Heart left ventricle (tissue), 16 donors: ENCODE measurements at regions of chr12 and their contacts with region 1.

Region 1: GRCh38 chr12:53461059-53461458 is 9.2 kb downstream of the PCBP2 start:
- DNase-seq: peak in 4 of 5 donors; percentile 70 to 75 (median 73)
- ATAC-seq: peak; percentile 83 to 93 (median 90)
- H3K4me3 ChIP-seq: peak overlapping the region in 1 of 12 donors; percentile 1
- H3K27ac ChIP-seq: peak overlapping the region in 11 of 12 donors; percentile 23 to 75 (median 60)
- H3K4me1 ChIP-seq: peaks cover 2 to 81% (median 49%) of the 10 kb centered on the region in 12 donors
- H3K27me3 ChIP-seq: no peaks in the 10 kb centered on the region
- CTCF ChIP-seq: no peak
- POLR2A ChIP-seq: peak; percentile 22 to 63

Region 2: GRCh38 chr12:53474819-53475218 is 13.8 kb after region 1 on chr12:
- intact Hi-C with region 1: loop called in 1 of 10 experiments (anchors 2 kb)
- DNase-seq: no peak
- ATAC-seq: no peak
- H3K4me3 ChIP-seq: no peak overlapping the region
- H3K27ac ChIP-seq: peak overlapping the region in 5 of 12 donors; percentile 6 to 25 (median 13)
- H3K4me1 ChIP-seq: peaks cover 3 to 82% (median 58%) of the 10 kb centered on the region in 12 donors
- H3K27me3 ChIP-seq: no peaks in the 10 kb centered on the region
- CTCF ChIP-seq: no peak
- POLR2A ChIP-seq: no peak